ENCODE measurements at regions of chr22 and their contacts with region 1.

Region 1: GRCh38 chr22:31272522-31273446 is 19.5 kb downstream of the PIK3IP1 start:
- DNase-seq: peak in 1 of 2 experiments; percentile 77
- H3K4me3 ChIP-seq: no peak overlapping the region
- H3K27ac ChIP-seq: no peak overlapping the region
- H3K4me1 ChIP-seq: peaks cover 0 to 13% (median 5%) of the 10 kb centered on the region in 4 experiments; a peak in 4 of 7 replicates
- H3K27me3 ChIP-seq: no peaks in the 10 kb centered on the region
- CTCF ChIP-seq: peak in 2 of 3 experiments; percentile 85 to 88; a peak in 3 of 4 replicates
- EP300 ChIP-seq: no peak
- POLR2A ChIP-seq: no peak
- RAD21 ChIP-seq: peak; percentile 81 to 90

Region 2: GRCh38 chr22:31160328-31160978 is 112.3 kb before region 1 on chr22:
- CTCF ChIA-PET with region 1: interaction called, 12 read pairs
- POLR2A ChIA-PET with region 1: no interaction called
- DNase-seq: peak in 1 of 2 experiments; percentile 63
- H3K4me3 ChIP-seq: peak overlapping the region; percentile 71 to 87 (median 74)
- H3K27ac ChIP-seq: 0 out of 2 replicates have a peak overlapping the region, but pooled peaks have one; percentile 23
- H3K4me1 ChIP-seq: peaks cover 0 to 8% (median 1%) of the 10 kb centered on the region in 4 experiments; a peak in 2 of 7 replicates
- H3K27me3 ChIP-seq: peaks cover 0 to 25% (median 7%) of the 10 kb centered on the region in 4 experiments; a peak in 6 of 7 replicates
- CTCF ChIP-seq: no peak
- EP300 ChIP-seq: no peak
- POLR2A ChIP-seq: no peak
- RAD21 ChIP-seq: no peak

Region 3: GRCh38 chr22:31199183-31199582 is 73.6 kb before region 1 on chr22:
- CTCF ChIA-PET with region 1: interaction called, 21 read pairs
- POLR2A ChIA-PET with region 1: interaction called, 3 read pairs
- DNase-seq: no peak
- H3K4me3 ChIP-seq: no peak overlapping the region
- H3K27ac ChIP-seq: no peak overlapping the region
- H3K4me1 ChIP-seq: no peaks in the 10 kb centered on the region
- H3K27me3 ChIP-seq: no peaks in the 10 kb centered on the region
- CTCF ChIP-seq: peak in 2 of 3 experiments; percentile 43 to 46; a peak in 3 of 4 replicates
- EP300 ChIP-seq: no peak
- POLR2A ChIP-seq: no peak
- RAD21 ChIP-seq: peak; percentile 49 to 62

Region 4: GRCh38 chr22:31211862-31212730 is 60.7 kb before region 1 on chr22 and contains the start of gene LIMK2:
- CTCF ChIA-PET with region 1: interaction called, 88 read pairs
- POLR2A ChIA-PET with region 1: interaction called, 30 read pairs
- DNase-seq: peak; percentile 83 to 98
- H3K4me3 ChIP-seq: peak within 1 kb of the TSS; percentile 76 to 96 (median 93)
- H3K27ac ChIP-seq: peak within 1 kb of the TSS; percentile 73; the same call in 1 of the 2 replicates
- H3K4me1 ChIP-seq: peaks cover 0 to 7% (median 4%) of the 10 kb centered on the region in 4 experiments; a peak in 5 of 7 replicates
- H3K27me3 ChIP-seq: no peaks in the 10 kb centered on the region
- CTCF ChIP-seq: peak; percentile 63 to 82 (median 77)
- EP300 ChIP-seq: no peak
- POLR2A ChIP-seq: peak; percentile 87 to 92
- RAD21 ChIP-seq: peak; percentile 56 to 70
- total RNA-seq, gene LIMK2: 37.6 and 41.1 TPM in 2 replicates

Region 5: DNA sequence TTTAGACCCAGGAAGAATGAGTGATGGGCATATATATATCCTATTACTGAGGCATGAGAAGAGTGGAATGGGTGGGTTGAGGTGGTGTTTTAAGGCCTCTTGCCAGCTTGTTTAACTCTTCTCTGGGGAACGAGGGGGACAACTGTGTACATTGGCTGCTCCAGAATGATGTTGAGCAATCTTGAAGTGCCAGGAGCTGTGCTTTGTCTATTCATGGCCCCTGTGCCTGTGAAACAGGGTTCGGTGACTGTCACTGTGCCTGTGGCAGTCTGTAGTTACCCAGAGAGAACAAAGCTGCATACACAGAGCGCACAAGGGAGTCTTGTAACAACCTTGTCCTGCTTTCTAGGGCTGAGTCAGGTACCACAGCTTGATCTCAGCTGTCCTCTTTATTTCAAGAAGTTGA is 49.0 kb before region 1 on chr22:
- CTCF ChIA-PET with region 1: interaction called, 11 read pairs
- POLR2A ChIA-PET with region 1: interaction called, 4 read pairs
- DNase-seq: no peak
- H3K4me3 ChIP-seq: no peak overlapping the region
- H3K27ac ChIP-seq: no peak overlapping the region
- H3K4me1 ChIP-seq: no peaks in the 10 kb centered on the region; a peak in 2 of 7 replicates
- H3K27me3 ChIP-seq: no peaks in the 10 kb centered on the region
- CTCF ChIP-seq: no peak
- EP300 ChIP-seq: no peak
- POLR2A ChIP-seq: no peak
- RAD21 ChIP-seq: no peak

Region 6: GRCh38 chr22:31248138-31248745 is 24.5 kb before region 1 on chr22:
- CTCF ChIA-PET with region 1: interaction called, 122 read pairs
- POLR2A ChIA-PET with region 1: interaction called, 5 read pairs
- DNase-seq: peak; percentile 67 to 68
- H3K4me3 ChIP-seq: 0 out of 8 replicates have a peak overlapping the region, but pooled peaks of 1 of the 4 experiments have one; percentile 13
- H3K27ac ChIP-seq: no peak overlapping the region
- H3K4me1 ChIP-seq: peaks cover 8 to 13% (median 12%) of the 10 kb centered on the region in 4 experiments
- H3K27me3 ChIP-seq: no peaks in the 10 kb centered on the region
- CTCF ChIP-seq: no peak
- EP300 ChIP-seq: no peak
- POLR2A ChIP-seq: no peak
- RAD21 ChIP-seq: no peak

Region 7: DNA sequence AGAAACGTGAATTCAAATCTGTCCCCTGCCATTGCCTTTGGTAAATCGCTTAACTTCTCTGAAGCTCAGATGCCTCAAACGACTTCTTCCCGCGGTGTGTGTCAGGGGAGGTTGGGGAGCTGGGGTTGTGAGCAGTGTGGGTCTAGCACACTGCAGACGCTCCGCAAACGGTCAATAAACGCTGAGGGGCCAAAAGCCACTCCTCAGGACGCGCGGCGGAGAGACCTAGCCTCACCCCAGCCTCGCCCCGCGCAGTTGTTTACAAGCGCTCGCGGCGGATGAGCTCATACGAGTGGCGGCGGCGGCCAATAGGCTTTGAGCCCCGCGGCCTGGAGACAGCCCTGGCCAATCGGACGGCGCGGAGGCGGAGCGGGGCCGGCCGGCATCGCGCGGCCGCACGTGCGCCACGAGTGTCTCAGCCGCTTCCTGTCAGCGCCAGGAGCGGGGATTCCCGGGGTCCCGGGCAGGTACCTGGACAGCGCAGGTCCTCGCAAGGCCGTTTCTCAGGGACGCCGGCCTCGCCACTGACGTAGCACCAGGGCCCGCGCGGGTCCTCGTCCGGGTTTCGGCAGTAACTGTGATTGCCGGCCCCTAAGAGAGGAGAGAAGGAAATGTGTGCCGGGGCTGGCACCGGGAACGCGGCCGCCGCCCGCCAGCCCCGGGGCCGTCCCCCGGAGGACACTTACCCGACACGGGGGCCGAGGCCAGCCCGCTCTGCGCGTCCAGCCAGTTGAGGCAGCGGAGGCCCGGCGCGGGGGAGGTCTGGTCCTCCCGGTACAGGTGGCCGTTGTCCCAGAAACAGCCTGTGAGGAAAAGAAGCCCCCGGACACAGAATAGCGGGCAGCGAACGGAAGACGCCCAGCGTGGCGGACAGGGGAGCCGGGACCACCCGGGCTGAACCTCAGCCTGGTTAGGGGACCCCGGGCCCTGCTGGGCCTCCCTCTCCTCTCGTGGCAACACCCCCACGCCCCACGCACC is 18.0 kb after region 1 on chr22:
- CTCF ChIA-PET with region 1: interaction called, 50 read pairs
- POLR2A ChIA-PET with region 1: interaction called, 3 read pairs
- DNase-seq: peak; percentile 53 to 90
- H3K4me3 ChIP-seq: peak overlapping the region; percentile 28 to 62 (median 38)
- H3K27ac ChIP-seq: no peak overlapping the region
- H3K4me1 ChIP-seq: peaks cover 0 to 14% (median 5%) of the 10 kb centered on the region in 4 experiments; a peak in 4 of 7 replicates
- H3K27me3 ChIP-seq: peaks cover 6 to 30% (median 20%) of the 10 kb centered on the region in 4 experiments; a peak in 6 of 7 replicates
- CTCF ChIP-seq: no peak
- EP300 ChIP-seq: no peak
- POLR2A ChIP-seq: peak in 1 of 2 experiments; percentile 71; a peak in 2 of 3 replicates
- RAD21 ChIP-seq: no peak